Activated CD4-positive, alpha-beta T cell treated with anti-CD3 and anti-CD28 coated beads, Interleukin-2, amount 10 ng/mL, durations not matched to agents 24 days and 14 days (primary cell): ENCODE measurements at regions of chr6 and their contacts with region 1.

Region 1: GRCh38 chr6:134436281-134436815 is 118.4 kb upstream of the SGK1 start:
- DNase-seq: peak; percentile 90
- H3K4me3 Mint-ChIP-seq: peak overlapping the region; percentile 73
- H3K27ac Mint-ChIP-seq: peak overlapping the region; percentile 94
- H3K4me1 Mint-ChIP-seq: peaks cover 37% of the 10 kb centered on the region
- H3K27me3 Mint-ChIP-seq: no peaks in the 10 kb centered on the region

Region 2: GRCh38 chr6:133817460-133818047 is 618.8 kb before region 1 on chr6:
- intact Hi-C with region 1: no loop called
- DNase-seq: peak; percentile 78
- H3K4me3 Mint-ChIP-seq: no peak overlapping the region
- H3K27ac Mint-ChIP-seq: no peak overlapping the region
- H3K4me1 Mint-ChIP-seq: no peaks in the 10 kb centered on the region
- H3K27me3 Mint-ChIP-seq: no peaks in the 10 kb centered on the region

Region 3: GRCh38 chr6:134235937-134236751 is 200.2 kb before region 1 on chr6:
- intact Hi-C with region 1: loop called (anchors 1 kb)
- DNase-seq: peak; percentile 69
- H3K4me3 Mint-ChIP-seq: peak overlapping the region; percentile 51
- H3K27ac Mint-ChIP-seq: peak overlapping the region; percentile 88
- H3K4me1 Mint-ChIP-seq: peaks cover 40% of the 10 kb centered on the region
- H3K27me3 Mint-ChIP-seq: no peaks in the 10 kb centered on the region

Region 4: GRCh38 chr6:134247231-134247833 is 189.0 kb before region 1 on chr6:
- intact Hi-C with region 1: loop called (anchors 1 kb)
- DNase-seq: peak; percentile 94
- H3K4me3 Mint-ChIP-seq: peak overlapping the region; percentile 54
- H3K27ac Mint-ChIP-seq: peak overlapping the region; percentile 93
- H3K4me1 Mint-ChIP-seq: peaks cover 48% of the 10 kb centered on the region
- H3K27me3 Mint-ChIP-seq: no peaks in the 10 kb centered on the region

Region 5: GRCh38 chr6:134352786-134353480 is 83.4 kb before region 1 on chr6:
- intact Hi-C with region 1: loop called (anchors 1 kb)
- DNase-seq: no peak
- H3K4me3 Mint-ChIP-seq: peak overlapping the region; percentile 81
- H3K27ac Mint-ChIP-seq: peak overlapping the region; percentile 91
- H3K4me1 Mint-ChIP-seq: peaks cover 31% of the 10 kb centered on the region
- H3K27me3 Mint-ChIP-seq: no peaks in the 10 kb centered on the region

Region 6: DNA sequence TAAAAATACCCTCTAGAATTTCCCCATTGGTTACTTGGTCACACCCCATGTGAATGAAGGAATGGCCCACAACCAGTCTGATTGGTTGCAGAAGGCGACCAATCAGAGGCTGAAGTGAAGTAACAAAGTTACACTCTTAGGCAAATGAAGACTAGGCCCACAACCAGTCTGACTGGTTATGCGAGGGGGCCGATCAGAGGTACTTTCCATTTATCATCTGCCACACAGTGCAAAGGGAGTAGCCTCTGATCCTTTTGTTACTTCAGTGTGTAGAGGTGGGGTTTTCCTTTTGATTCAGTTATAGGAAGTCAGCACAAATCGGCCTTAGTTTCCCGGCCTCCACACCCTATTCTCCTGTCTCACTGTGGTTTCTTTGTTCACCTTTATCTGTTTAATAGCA is 57.3 kb before region 1 on chr6:
- intact Hi-C with region 1: loop called (anchors 1 kb)
- DNase-seq: peak; percentile 83
- H3K4me3 Mint-ChIP-seq: peak overlapping the region; percentile 67
- H3K27ac Mint-ChIP-seq: peak overlapping the region; percentile 89
- H3K4me1 Mint-ChIP-seq: peaks cover 36% of the 10 kb centered on the region
- H3K27me3 Mint-ChIP-seq: no peaks in the 10 kb centered on the region

Region 7: DNA sequence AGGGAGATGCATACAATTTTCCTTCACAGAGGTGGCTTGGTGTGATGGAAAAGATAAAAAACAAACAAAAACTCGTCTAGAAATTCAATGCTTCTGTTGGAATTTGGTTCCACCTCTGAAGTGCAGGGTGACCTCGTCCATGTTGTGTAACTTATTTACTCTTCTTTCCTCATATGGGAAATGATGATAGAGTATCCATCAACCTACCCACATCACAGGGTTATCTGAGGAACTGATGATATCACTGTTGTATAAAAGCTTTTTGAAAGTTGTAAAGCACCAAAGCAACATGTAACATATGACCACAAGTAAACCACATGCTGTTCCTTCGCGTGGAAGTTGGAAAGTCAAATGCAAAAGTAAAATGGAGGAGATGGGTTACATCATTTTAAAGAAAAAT is 93.6 kb after region 1 on chr6:
- intact Hi-C with region 1: loop called (anchors 2 kb)
- DNase-seq: peak; percentile 77
- H3K4me3 Mint-ChIP-seq: no peak overlapping the region
- H3K27ac Mint-ChIP-seq: no peak overlapping the region
- H3K4me1 Mint-ChIP-seq: peaks cover 44% of the 10 kb centered on the region
- H3K27me3 Mint-ChIP-seq: no peaks in the 10 kb centered on the region

Region 8: DNA sequence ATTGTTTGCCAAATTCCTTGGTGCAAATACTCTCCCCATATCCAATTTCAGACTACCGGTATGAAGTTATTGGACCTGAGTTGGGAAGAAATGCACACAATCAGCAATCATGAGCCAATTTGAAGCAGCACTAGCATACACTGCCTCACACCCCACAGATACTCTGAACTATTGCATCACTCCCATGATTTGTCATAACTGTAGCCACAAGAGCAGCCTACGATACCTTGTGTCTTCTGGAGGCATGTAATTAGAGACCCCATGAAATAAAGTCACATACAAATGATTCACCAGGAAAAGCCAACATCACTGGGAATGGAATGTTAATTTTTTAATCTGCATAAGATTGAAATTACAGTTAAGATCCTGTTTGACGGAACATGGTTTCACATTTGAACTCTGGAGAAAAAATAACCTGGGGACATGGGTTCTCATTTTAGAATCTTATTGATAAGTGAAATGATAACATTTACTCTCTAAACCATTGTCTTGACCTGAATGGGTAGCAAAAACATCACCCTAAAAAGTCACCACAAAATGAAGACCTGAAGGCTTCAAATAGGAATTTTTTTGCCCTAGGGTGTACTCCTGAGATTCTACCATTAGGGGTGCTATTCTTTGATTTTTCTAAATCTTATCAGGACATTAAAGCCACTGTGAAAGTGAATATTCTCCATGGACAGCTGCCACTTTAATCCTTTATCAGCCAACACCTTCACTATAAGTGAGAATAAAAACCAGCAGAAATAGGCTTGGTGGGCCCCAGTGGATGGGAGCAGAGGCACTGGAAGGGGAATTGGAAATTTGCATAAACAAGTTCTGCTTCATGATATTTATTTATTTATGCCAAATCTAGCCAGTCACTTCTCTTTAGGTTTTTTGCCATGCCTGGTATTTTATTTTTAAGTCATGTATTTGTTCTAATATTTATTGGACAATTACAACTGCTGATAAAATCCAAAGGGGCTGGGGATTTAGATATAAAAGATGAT is 652.8 kb after region 1 on chr6:
- intact Hi-C with region 1: loop called (anchors 2 kb)
- DNase-seq: peak; percentile 85
- H3K4me3 Mint-ChIP-seq: peak overlapping the region; percentile 59
- H3K27ac Mint-ChIP-seq: peak overlapping the region; percentile 90
- H3K4me1 Mint-ChIP-seq: peaks cover 75% of the 10 kb centered on the region
- H3K27me3 Mint-ChIP-seq: no peaks in the 10 kb centered on the region